T-cell (primary cell): ENCODE measurements at regions of chr7 and their contacts with region 1.

Region 1: DNA sequence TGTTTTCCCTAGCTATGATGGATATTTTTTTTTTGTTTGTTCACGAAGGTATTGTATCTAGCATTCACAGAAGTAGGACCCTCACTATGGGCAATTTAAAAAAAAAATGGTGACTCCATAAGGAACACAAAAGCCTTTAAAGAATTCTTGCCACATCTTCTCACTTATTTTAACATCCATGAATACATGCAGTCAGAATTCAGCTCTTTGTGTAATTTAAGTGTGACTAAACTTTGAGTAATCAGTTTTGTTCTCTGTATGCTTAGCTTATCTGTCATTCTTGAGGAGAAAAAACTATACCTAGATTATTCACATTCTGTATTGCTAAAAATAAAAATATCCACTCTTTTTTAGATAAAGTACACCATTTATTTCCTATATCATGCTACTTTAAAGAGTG is 313.2 kb upstream of the KCND2 start:
- DNase-seq: no peak
- ATAC-seq: no peak
- H3K4me3 ChIP-seq: no peak overlapping the region
- H3K4me3 Mint-ChIP-seq: no peak overlapping the region
- H3K27ac ChIP-seq: no peak overlapping the region
- H3K27ac Mint-ChIP-seq: no peak overlapping the region
- H3K4me1 ChIP-seq: no peaks in the 10 kb centered on the region
- H3K4me1 Mint-ChIP-seq: no peaks in the 10 kb centered on the region
- H3K27me3 ChIP-seq: no peaks in the 10 kb centered on the region
- H3K27me3 Mint-ChIP-seq: no peaks in the 10 kb centered on the region

Region 2: GRCh38 chr7:119838444-119838843 is 121.4 kb before region 1 on chr7:
- CTCF ChIA-PET with region 1: no interaction called
- POLR2A ChIA-PET with region 1: interaction called in 1 of 2 experiments, 11 read pairs
- DNase-seq: no peak
- ATAC-seq: no peak
- H3K4me3 ChIP-seq: no peak overlapping the region
- H3K4me3 Mint-ChIP-seq: no peak overlapping the region
- H3K27ac ChIP-seq: no peak overlapping the region
- H3K27ac Mint-ChIP-seq: no peak overlapping the region
- H3K4me1 ChIP-seq: no peaks in the 10 kb centered on the region
- H3K4me1 Mint-ChIP-seq: no peaks in the 10 kb centered on the region
- H3K27me3 ChIP-seq: no peaks in the 10 kb centered on the region
- H3K27me3 Mint-ChIP-seq: no peaks in the 10 kb centered on the region

Region 3: GRCh38 chr7:119868387-119868786 is 91.4 kb before region 1 on chr7:
- CTCF ChIA-PET with region 1: no interaction called
- POLR2A ChIA-PET with region 1: no interaction called
- DNase-seq: no peak
- ATAC-seq: no peak
- H3K4me3 ChIP-seq: no peak overlapping the region
- H3K4me3 Mint-ChIP-seq: no peak overlapping the region
- H3K27ac ChIP-seq: no peak overlapping the region
- H3K27ac Mint-ChIP-seq: no peak overlapping the region
- H3K4me1 ChIP-seq: no peaks in the 10 kb centered on the region
- H3K4me1 Mint-ChIP-seq: no peaks in the 10 kb centered on the region
- H3K27me3 ChIP-seq: no peaks in the 10 kb centered on the region
- H3K27me3 Mint-ChIP-seq: no peaks in the 10 kb centered on the region

Region 4: GRCh38 chr7:120110169-120110568 is 150.4 kb after region 1 on chr7:
- CTCF ChIA-PET with region 1: no interaction called
- POLR2A ChIA-PET with region 1: no interaction called
- DNase-seq: no peak
- ATAC-seq: no peak
- H3K4me3 ChIP-seq: no peak overlapping the region
- H3K4me3 Mint-ChIP-seq: no peak overlapping the region
- H3K27ac ChIP-seq: no peak overlapping the region
- H3K27ac Mint-ChIP-seq: no peak overlapping the region
- H3K4me1 ChIP-seq: no peaks in the 10 kb centered on the region
- H3K4me1 Mint-ChIP-seq: no peaks in the 10 kb centered on the region
- H3K27me3 ChIP-seq: no peaks in the 10 kb centered on the region
- H3K27me3 Mint-ChIP-seq: no peaks in the 10 kb centered on the region